T-cell (primary cell): ENCODE measurements at regions of chr20 and their contacts with region 1.

Region 1: GRCh38 chr20:31822421-31823330 is 3.5 kb downstream of the MYLK2 start:
- DNase-seq: peak; percentile 28 to 84 (median 64)
- ATAC-seq: peak; percentile 85 to 94 (median 86)
- H3K4me3 ChIP-seq: no peak overlapping the region
- H3K4me3 Mint-ChIP-seq: peak overlapping the region in 2 of 3 donors; percentile 30 to 34
- H3K27ac ChIP-seq: no peak overlapping the region
- H3K27ac Mint-ChIP-seq: no peak overlapping the region
- H3K4me1 ChIP-seq: peaks cover 0 to 10% of the 10 kb centered on the region in 2 experiments
- H3K4me1 Mint-ChIP-seq: peaks cover 0 to 8% (median 2%) of the 10 kb centered on the region in 3 donors
- H3K27me3 ChIP-seq: peaks cover 0 to 18% of the 10 kb centered on the region in 2 experiments
- H3K27me3 Mint-ChIP-seq: peaks cover 0 to 5% of the 10 kb centered on the region in 2 donors

Region 2: GRCh38 chr20:31781945-31782344 is 40.7 kb before region 1 on chr20:
- CTCF ChIA-PET with region 1: no interaction called
- POLR2A ChIA-PET with region 1: no interaction called
- DNase-seq: no peak
- ATAC-seq: no peak
- H3K4me3 ChIP-seq: no peak overlapping the region
- H3K4me3 Mint-ChIP-seq: no peak overlapping the region
- H3K27ac ChIP-seq: no peak overlapping the region
- H3K27ac Mint-ChIP-seq: no peak overlapping the region
- H3K4me1 ChIP-seq: no peaks in the 10 kb centered on the region
- H3K4me1 Mint-ChIP-seq: no peaks in the 10 kb centered on the region
- H3K27me3 ChIP-seq: no peaks in the 10 kb centered on the region
- H3K27me3 Mint-ChIP-seq: no peaks in the 10 kb centered on the region

Region 3: GRCh38 chr20:32960849-32961731 is 1138.4 kb after region 1 on chr20:
- CTCF ChIA-PET with region 1: interaction called in 1 of 2 experiments, 13 read pairs
- POLR2A ChIA-PET with region 1: no interaction called
- DNase-seq: peak in 1 of 35 experiments; percentile 4
- ATAC-seq: no peak
- H3K4me3 ChIP-seq: no peak overlapping the region
- H3K4me3 Mint-ChIP-seq: no peak overlapping the region
- H3K27ac ChIP-seq: no peak overlapping the region
- H3K27ac Mint-ChIP-seq: peak overlapping the region; percentile 45 to 75
- H3K4me1 ChIP-seq: peaks cover 25 to 40% of the 10 kb centered on the region in 2 experiments
- H3K4me1 Mint-ChIP-seq: peaks cover 35 to 56% (median 51%) of the 10 kb centered on the region in 3 donors
- H3K27me3 ChIP-seq: no peaks in the 10 kb centered on the region
- H3K27me3 Mint-ChIP-seq: no peaks in the 10 kb centered on the region

Region 4: DNA sequence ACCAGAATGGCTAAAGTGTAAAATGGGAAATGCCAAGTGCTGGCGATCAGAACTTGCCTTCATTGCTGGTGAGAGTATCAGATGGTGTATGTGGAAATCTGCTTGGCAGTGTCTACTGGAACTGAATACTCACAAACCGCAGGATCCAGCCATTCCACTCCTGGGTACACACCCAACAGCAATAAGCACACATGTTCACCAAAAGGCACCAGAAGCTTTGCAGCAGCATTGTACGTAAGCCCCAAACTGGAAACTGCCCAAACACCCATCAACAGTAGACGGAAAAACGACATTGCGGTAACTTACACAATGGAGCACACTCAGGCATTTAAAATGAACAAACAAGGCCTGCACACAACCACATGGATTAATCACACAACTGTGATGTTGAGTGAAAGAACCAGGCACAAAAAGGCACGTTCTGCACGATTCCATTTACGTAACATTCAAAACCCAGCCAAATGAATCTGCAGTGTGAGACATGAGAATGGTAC is 1307.9 kb after region 1 on chr20:
- CTCF ChIA-PET with region 1: no interaction called
- POLR2A ChIA-PET with region 1: no interaction called
- DNase-seq: no peak
- ATAC-seq: no peak
- H3K4me3 ChIP-seq: no peak overlapping the region
- H3K4me3 Mint-ChIP-seq: no peak overlapping the region
- H3K27ac ChIP-seq: no peak overlapping the region
- H3K27ac Mint-ChIP-seq: no peak overlapping the region
- H3K4me1 ChIP-seq: no peaks in the 10 kb centered on the region
- H3K4me1 Mint-ChIP-seq: no peaks in the 10 kb centered on the region
- H3K27me3 ChIP-seq: peaks cover 2 to 26% of the 10 kb centered on the region in 2 experiments
- H3K27me3 Mint-ChIP-seq: peaks cover 0 to 14% of the 10 kb centered on the region in 2 donors